AG04450 (cell line): ENCODE measurements at regions of chr5 and their contacts with region 1.

Region 1: DNA sequence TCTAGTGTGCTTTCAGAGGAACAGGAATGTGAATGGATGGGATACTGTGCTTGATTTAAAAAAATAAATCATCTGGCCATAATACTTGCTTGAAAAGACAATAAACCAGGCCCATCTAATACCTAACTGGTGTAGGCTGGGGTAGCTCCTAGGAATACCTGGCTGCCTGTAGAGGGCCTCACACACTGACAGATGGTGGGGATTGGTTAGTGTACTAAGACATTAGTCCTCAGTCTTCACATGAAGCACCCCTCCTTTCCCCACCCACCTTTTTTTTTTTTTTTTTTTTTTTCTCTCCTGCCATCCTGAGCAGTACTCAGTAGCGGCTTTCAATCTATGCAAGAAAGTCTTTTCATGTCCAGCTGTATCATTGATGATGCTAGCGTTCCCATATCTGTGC is 130.5 kb downstream of the ADGRV1 start:
- DNase-seq: no peak
- H3K4me3 ChIP-seq: no peak overlapping the region
- H3K27ac ChIP-seq: no peak overlapping the region
- H3K27me3 ChIP-seq: no peaks in the 10 kb centered on the region
- CTCF ChIP-seq: no peak

Region 2: GRCh38 chr5:90675222-90675621 is 13.8 kb before region 1 on chr5:
- CTCF ChIA-PET with region 1: interaction called, 18 read pairs
- POLR2A ChIA-PET with region 1: no interaction called
- DNase-seq: no peak
- H3K4me3 ChIP-seq: no peak overlapping the region
- H3K27ac ChIP-seq: no peak overlapping the region
- H3K27me3 ChIP-seq: no peaks in the 10 kb centered on the region
- CTCF ChIP-seq: no peak